ENCODE measurements at regions of chr7 and their contacts with region 1.

Region 1: DNA sequence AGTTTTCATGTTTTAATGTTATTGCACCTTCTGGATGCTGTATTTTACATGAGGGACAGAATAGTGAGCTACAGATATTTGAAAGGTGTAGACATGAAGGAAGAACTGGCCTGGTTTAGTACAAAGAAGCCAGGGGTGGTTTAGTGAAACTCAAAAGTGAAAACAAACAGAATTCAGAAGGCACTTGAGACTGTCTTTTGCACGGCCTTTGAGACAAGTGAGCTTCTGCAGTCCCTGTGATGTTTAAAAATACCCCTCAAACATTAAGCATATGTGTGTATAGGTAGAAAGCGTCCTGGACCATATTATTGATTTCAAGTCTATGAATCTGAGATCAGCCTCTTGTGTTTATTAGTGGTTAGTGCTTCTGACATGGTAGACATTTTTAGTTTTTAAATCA is 118.9 kb downstream of the CDK14 start:
- DNase-seq: no peak
- ATAC-seq: peak; percentile 65
- H3K4me3 ChIP-seq: peak overlapping the region; percentile 52; the same call in 1 of the 2 replicates
- H3K27ac ChIP-seq: peak overlapping the region; percentile 51; the same call in 1 of the 2 replicates
- H3K4me1 ChIP-seq: no peaks in the 10 kb centered on the region
- H3K27me3 ChIP-seq: no peaks in the 10 kb centered on the region
- CTCF ChIP-seq: no peak
- EP300 ChIP-seq: no peak
- POLR2A ChIP-seq: no peak
- RAD21 ChIP-seq: no peak

Region 2: DNA sequence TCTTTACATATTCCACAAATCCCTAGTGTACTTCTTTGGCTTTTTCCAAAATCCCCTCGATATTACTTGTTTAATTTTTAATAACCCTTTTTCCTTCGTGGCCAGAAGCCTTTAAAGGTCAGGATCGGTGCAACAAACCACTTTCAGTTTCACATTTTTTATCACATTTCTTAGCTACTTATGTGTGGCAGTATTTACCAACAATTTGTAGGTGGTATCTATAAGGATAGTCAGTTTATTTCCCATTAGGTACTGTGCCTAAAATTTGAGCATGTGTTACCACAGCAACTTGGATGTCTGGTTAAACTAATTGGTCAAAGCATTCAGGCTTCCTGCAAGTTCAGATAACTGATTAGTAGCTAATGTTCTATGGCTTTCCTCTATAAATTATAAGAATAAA is 14.0 kb before region 1 on chr7:
- CTCF ChIA-PET with region 1: interaction called, 48 read pairs
- POLR2A ChIA-PET with region 1: interaction called, 7 read pairs
- RAD21 ChIA-PET with region 1: interaction called, 33 read pairs
- SMC1A ChIA-PET with region 1: interaction called, 30 read pairs
- in situ Hi-C with region 1: no loop called
- intact Hi-C with region 1: no loop called
- DNase-seq: no peak
- ATAC-seq: peak; percentile 81
- H3K4me3 ChIP-seq: peak overlapping the region; percentile 58; the same call in 1 of the 2 replicates
- H3K27ac ChIP-seq: peak overlapping the region; percentile 47
- H3K4me1 ChIP-seq: peaks cover 4% of the 10 kb centered on the region
- H3K27me3 ChIP-seq: no peaks in the 10 kb centered on the region
- CTCF ChIP-seq: no peak
- EP300 ChIP-seq: no peak
- POLR2A ChIP-seq: no peak
- RAD21 ChIP-seq: no peak

Region 3: GRCh38 chr7:90736968-90737939 is 22.2 kb after region 1 on chr7:
- CTCF ChIA-PET with region 1: interaction called, 7 read pairs
- POLR2A ChIA-PET with region 1: interaction called, 6 read pairs
- RAD21 ChIA-PET with region 1: interaction called, 15 read pairs
- SMC1A ChIA-PET with region 1: interaction called, 41 read pairs
- in situ Hi-C with region 1: no loop called
- intact Hi-C with region 1: no loop called
- DNase-seq: peak; percentile 86
- ATAC-seq: peak; percentile 93
- H3K4me3 ChIP-seq: peak overlapping the region; percentile 10; the same call in 1 of the 2 replicates
- H3K27ac ChIP-seq: peak overlapping the region; percentile 81
- H3K4me1 ChIP-seq: peaks cover 20% of the 10 kb centered on the region
- H3K27me3 ChIP-seq: no peaks in the 10 kb centered on the region
- CTCF ChIP-seq: no peak
- EP300 ChIP-seq: peak; percentile 86 to 99
- POLR2A ChIP-seq: no peak
- RAD21 ChIP-seq: no peak

Region 4: DNA sequence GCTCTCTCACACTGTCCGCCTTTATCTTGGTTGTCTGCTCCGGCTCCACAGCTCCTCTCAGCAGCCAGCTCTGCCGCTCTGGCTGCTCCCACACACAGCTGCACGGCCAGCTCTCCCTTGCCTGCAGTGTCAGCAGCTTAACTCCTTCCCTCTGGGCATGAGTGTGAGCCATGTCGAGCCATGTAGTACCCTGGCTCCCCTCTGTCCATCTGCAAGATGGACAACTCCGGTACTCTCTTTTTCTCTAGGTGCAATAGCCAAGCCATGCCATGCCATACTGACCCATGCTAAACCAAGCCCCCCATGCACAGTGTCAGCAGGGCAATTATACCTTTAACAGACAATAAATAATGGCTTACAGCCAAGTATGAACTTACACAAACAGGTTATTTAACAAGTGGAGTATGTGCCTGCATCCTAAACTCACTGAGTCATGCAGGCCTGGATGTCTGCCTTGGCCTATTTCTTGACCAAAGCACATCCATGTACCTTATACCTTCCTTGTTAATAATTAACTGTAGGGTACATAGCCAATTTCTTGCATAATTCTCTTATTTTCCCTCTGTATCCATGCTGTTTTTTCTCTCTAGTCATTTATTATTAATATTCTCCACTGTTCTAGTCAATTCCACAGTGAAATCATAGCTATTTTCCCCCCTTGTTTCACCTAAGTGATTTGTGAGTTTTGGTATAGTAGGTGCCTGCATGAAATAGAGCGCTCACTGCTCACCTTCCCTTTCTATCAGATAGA is 51.9 kb after region 1 on chr7:
- CTCF ChIA-PET with region 1: interaction called, 7 read pairs
- POLR2A ChIA-PET with region 1: no interaction called
- RAD21 ChIA-PET with region 1: interaction called, 4 read pairs
- SMC1A ChIA-PET with region 1: interaction called, 14 read pairs
- in situ Hi-C with region 1: no loop called
- intact Hi-C with region 1: no loop called
- DNase-seq: no peak
- ATAC-seq: no peak; the same call in 2 of the 3 replicates
- H3K4me3 ChIP-seq: no peak overlapping the region
- H3K27ac ChIP-seq: no peak overlapping the region
- H3K4me1 ChIP-seq: no peaks in the 10 kb centered on the region
- H3K27me3 ChIP-seq: no peaks in the 10 kb centered on the region
- CTCF ChIP-seq: no peak
- EP300 ChIP-seq: no peak
- POLR2A ChIP-seq: no peak
- RAD21 ChIP-seq: no peak

Region 5: DNA sequence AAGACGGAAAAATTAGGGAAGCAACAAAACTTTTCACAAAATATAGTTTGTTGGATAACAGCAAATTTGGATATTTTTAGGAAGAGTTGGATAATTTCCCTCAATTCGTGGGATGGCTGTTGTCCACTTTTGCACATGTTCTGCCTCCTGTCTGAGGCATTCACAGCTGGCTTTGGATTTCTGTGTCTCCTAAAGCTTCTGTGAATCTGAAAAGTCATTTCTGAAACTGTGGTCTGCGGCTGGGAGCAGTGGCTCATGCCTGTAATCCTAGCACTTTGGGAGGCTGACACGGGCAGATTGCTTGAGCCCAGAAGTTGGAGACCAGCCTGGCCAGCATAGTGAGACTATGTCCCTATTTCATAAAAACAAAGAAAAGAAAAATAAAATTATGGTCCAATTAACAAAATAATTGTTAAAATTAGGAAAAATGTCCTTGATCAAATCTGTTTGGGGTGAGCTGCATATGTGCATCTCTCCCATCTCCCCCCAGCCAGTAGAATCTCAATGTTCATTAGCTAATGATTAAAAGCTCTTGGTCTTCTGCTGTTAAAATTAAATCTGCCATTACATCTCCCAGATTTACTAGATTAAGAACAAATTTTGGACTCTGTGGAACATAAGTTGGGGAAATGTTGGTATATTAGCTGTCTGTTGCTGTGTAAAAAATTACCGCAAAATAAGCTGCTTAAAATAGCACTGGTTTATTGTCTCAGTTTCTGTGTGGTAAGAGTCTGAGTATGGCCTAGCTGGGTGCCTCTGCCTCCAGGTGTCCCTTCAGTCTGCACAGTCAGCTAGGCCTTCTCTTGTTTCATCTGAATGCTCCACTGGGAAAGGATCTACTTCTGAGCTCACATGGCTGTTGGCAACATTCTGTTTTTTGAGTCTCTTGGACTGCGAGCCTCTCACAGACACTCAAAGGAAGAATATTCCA is 217.2 kb after region 1 on chr7:
- CTCF ChIA-PET with region 1: interaction called, 71 read pairs
- POLR2A ChIA-PET with region 1: no interaction called
- RAD21 ChIA-PET with region 1: interaction called, 55 read pairs
- SMC1A ChIA-PET with region 1: interaction called, 41 read pairs
- in situ Hi-C with region 1: no loop called
- intact Hi-C with region 1: no loop called
- DNase-seq: peak; percentile 73
- ATAC-seq: peak; percentile 98
- H3K4me3 ChIP-seq: no peak overlapping the region; the same call in none of the 2 replicates
- H3K27ac ChIP-seq: peak overlapping the region; percentile 54
- H3K4me1 ChIP-seq: peaks cover 22% of the 10 kb centered on the region
- H3K27me3 ChIP-seq: no peaks in the 10 kb centered on the region
- CTCF ChIP-seq: peak in 2 of 3 experiments; percentile 5 to 44; a peak in 2 of 6 replicates
- EP300 ChIP-seq: no peak; a peak in 1 of 4 replicates
- POLR2A ChIP-seq: no peak
- RAD21 ChIP-seq: peak; percentile 58

Region 6: GRCh38 chr7:92695308-92696261 is 1980.5 kb after region 1 on chr7:
- CTCF ChIA-PET with region 1: no interaction called
- POLR2A ChIA-PET with region 1: no interaction called
- RAD21 ChIA-PET with region 1: no interaction called
- SMC1A ChIA-PET with region 1: no interaction called
- in situ Hi-C with region 1: no loop called
- intact Hi-C with region 1: no loop called
- DNase-seq: no peak
- ATAC-seq: no peak
- H3K4me3 ChIP-seq: no peak overlapping the region
- H3K27ac ChIP-seq: no peak overlapping the region
- H3K4me1 ChIP-seq: no peaks in the 10 kb centered on the region
- H3K27me3 ChIP-seq: no peaks in the 10 kb centered on the region
- CTCF ChIP-seq: no peak
- EP300 ChIP-seq: no peak
- POLR2A ChIP-seq: no peak
- RAD21 ChIP-seq: no peak

Measured in GM12878 (cell line).